IMR-90 (cell line): ENCODE measurements at regions of chr11 and their contacts with region 1.

Region 1: GRCh38 chr11:10307442-10308207 is 2.8 kb downstream of the ADM start:
- DNase-seq: peak; percentile 94
- ATAC-seq: peak; percentile 8
- H3K4me3 ChIP-seq: peak overlapping the region; percentile 65
- H3K27ac ChIP-seq: peak overlapping the region; percentile 83
- H3K4me1 ChIP-seq: peaks cover 7% of the 10 kb centered on the region
- H3K27me3 ChIP-seq: no peaks in the 10 kb centered on the region
- CTCF ChIP-seq: peak; percentile 95
- POLR2A ChIP-seq: peak; percentile 51; the same call in 1 of the 2 replicates
- RAD21 ChIP-seq: peak; percentile 87

Region 2: DNA sequence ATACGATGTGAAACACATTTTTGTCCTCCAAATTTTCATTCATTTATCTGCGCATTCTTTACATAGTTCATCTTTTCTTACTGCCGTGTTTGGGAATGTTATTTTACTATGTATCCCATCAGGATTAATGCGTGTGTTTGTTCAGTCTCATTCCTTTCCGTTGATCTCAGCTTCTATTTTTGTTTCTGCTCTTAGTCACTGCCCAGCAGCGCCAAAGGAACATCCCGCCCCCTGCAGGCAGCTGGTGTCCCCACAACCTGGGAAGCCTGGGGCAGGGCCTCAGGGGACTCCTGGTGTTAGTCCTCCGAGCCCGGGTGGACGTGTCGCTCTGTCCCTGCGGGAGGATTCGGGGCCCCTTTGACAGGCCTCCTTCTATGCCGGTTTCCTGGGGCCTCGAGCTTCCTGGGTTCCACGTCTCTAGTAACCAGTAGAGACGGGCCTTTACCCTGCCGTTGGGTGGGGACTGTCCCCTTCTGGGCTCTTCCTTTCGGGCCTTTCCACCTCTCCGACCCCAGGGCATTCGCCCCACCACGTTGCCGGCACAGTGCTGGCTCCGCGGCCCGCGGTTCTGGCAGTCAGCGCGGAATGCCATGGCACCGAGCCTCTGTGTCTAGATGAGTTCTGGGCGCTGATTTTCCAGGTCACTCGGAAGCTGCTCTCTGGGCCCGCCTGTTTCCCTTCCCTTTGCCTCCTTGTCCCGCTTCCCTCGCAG is 694.4 kb before region 1 on chr11:
- CTCF ChIA-PET with region 1: no interaction called
- POLR2A ChIA-PET with region 1: no interaction called
- dilution Hi-C with region 1: no loop called
- in situ Hi-C with region 1: loop called (anchors 25 kb)
- intact Hi-C with region 1: loop called (anchors 5 kb)
- DNase-seq: peak; percentile 98
- ATAC-seq: peak; percentile 83
- H3K4me3 ChIP-seq: peak overlapping the region; percentile 7; the same call in 1 of the 2 replicates
- H3K27ac ChIP-seq: peak overlapping the region; percentile 91
- H3K4me1 ChIP-seq: peaks cover 16% of the 10 kb centered on the region
- H3K27me3 ChIP-seq: no peaks in the 10 kb centered on the region
- CTCF ChIP-seq: peak; percentile 98
- POLR2A ChIP-seq: peak; percentile 75
- RAD21 ChIP-seq: peak; percentile 79

Region 3: GRCh38 chr11:9817191-9817590 is 490.4 kb before region 1 on chr11:
- CTCF ChIA-PET with region 1: no interaction called
- POLR2A ChIA-PET with region 1: interaction called, 33 read pairs
- dilution Hi-C with region 1: no loop called
- in situ Hi-C with region 1: no loop called
- intact Hi-C with region 1: no loop called
- DNase-seq: no peak
- ATAC-seq: no peak
- H3K4me3 ChIP-seq: no peak overlapping the region
- H3K27ac ChIP-seq: no peak overlapping the region
- H3K4me1 ChIP-seq: peaks cover 10% of the 10 kb centered on the region; the same call in 1 of the 2 replicates
- H3K27me3 ChIP-seq: no peaks in the 10 kb centered on the region
- CTCF ChIP-seq: no peak
- POLR2A ChIP-seq: no peak
- RAD21 ChIP-seq: no peak

Region 4: GRCh38 chr11:9906043-9906791 is 401.4 kb before region 1 on chr11:
- CTCF ChIA-PET with region 1: no interaction called
- POLR2A ChIA-PET with region 1: interaction called, 3 read pairs
- dilution Hi-C with region 1: no loop called
- in situ Hi-C with region 1: no loop called
- intact Hi-C with region 1: loop called (anchors 5 kb)
- DNase-seq: peak; percentile 94
- ATAC-seq: peak; percentile 92
- H3K4me3 ChIP-seq: no peak overlapping the region
- H3K27ac ChIP-seq: peak overlapping the region; percentile 92; the same call in 1 of the 2 replicates
- H3K4me1 ChIP-seq: peaks cover 11% of the 10 kb centered on the region
- H3K27me3 ChIP-seq: no peaks in the 10 kb centered on the region
- CTCF ChIP-seq: no peak
- POLR2A ChIP-seq: no peak
- RAD21 ChIP-seq: no peak

Region 5: GRCh38 chr11:9943386-9944110 is 364.1 kb before region 1 on chr11:
- CTCF ChIA-PET with region 1: no interaction called
- POLR2A ChIA-PET with region 1: no interaction called
- dilution Hi-C with region 1: no loop called
- in situ Hi-C with region 1: no loop called
- intact Hi-C with region 1: no loop called
- DNase-seq: peak; percentile 97
- ATAC-seq: peak; percentile 80
- H3K4me3 ChIP-seq: no peak overlapping the region
- H3K27ac ChIP-seq: peak overlapping the region; percentile 91; the same call in 1 of the 2 replicates
- H3K4me1 ChIP-seq: peaks cover 6% of the 10 kb centered on the region
- H3K27me3 ChIP-seq: no peaks in the 10 kb centered on the region
- CTCF ChIP-seq: no peak
- POLR2A ChIP-seq: no peak
- RAD21 ChIP-seq: no peak

Region 6: DNA sequence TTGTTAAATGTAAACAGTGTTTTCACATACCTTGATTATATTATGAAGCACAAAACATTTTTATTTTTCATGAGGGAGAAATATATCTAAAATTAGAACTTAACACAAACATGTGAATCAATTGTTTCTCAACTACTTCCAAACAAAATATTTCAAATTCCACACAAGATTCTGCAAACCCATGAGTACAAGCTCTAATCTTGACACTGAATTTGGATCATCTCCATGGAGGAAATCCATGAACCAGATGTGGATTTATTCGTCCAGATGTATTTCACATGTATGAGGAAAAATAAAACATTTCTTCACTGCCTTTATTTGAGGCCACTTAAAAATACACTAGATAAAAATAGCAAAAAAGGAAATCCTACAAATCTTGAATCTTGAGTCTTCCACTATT is 197.8 kb before region 1 on chr11:
- CTCF ChIA-PET with region 1: no interaction called
- POLR2A ChIA-PET with region 1: no interaction called
- dilution Hi-C with region 1: no loop called
- in situ Hi-C with region 1: no loop called
- intact Hi-C with region 1: loop called (anchors 10 kb)
- DNase-seq: peak; percentile 83
- ATAC-seq: peak; percentile 33
- H3K4me3 ChIP-seq: no peak overlapping the region
- H3K27ac ChIP-seq: no peak overlapping the region
- H3K4me1 ChIP-seq: peaks cover 8% of the 10 kb centered on the region; the same call in 1 of the 2 replicates
- H3K27me3 ChIP-seq: no peaks in the 10 kb centered on the region
- CTCF ChIP-seq: no peak
- POLR2A ChIP-seq: no peak
- RAD21 ChIP-seq: no peak

Region 7: GRCh38 chr11:10331548-10332289 is 24.1 kb after region 1 on chr11:
- CTCF ChIA-PET with region 1: no interaction called
- POLR2A ChIA-PET with region 1: no interaction called
- dilution Hi-C with region 1: no loop called
- in situ Hi-C with region 1: no loop called
- intact Hi-C with region 1: no loop called
- DNase-seq: no peak
- ATAC-seq: no peak
- H3K4me3 ChIP-seq: no peak overlapping the region
- H3K27ac ChIP-seq: no peak overlapping the region
- H3K4me1 ChIP-seq: peaks cover 22% of the 10 kb centered on the region
- H3K27me3 ChIP-seq: no peaks in the 10 kb centered on the region
- CTCF ChIP-seq: no peak
- POLR2A ChIP-seq: no peak
- RAD21 ChIP-seq: no peak

Region 8: DNA sequence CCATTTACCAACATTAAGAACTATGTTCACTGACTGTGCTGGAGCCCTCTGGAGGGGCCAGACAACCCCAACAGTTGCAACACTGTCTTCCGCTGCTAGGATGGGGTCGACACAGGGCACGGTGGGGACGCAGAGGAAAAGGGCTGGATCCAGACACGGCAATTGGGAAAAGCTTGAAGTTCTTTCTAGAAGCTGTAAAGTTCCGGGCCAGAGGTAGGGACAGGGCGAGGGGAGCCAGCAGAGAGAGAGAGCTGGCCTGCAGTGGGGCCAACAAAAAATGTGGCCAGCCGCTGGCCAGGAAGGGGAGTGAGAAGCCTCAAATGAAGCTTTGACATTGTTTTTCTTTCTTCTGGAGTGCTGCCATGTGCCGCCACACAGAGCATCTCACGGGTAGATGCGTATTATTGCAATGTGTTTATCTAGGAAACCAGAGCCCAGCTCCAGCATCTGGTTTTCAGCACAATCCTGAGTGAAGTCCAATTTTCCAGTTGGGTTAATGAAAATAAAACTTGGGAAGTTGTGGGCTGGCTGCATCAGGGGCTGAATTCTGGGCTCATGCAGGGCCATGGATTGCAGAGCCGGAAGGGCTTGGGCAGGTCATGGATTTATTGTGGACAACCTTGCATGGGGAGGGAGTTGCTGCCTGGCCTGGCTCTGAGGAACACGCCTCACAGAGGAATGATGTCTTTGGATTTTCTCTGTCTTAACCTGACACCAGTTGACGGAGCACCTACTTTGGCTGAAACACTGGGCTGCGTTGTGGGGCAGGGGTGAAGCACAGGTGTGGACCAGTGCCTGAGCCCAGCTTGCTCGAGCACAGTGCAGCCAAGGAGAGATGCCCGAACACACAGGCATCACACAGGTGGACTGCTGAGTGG is 79.8 kb after region 1 on chr11:
- CTCF ChIA-PET with region 1: no interaction called
- POLR2A ChIA-PET with region 1: interaction called, 18 read pairs
- dilution Hi-C with region 1: no loop called
- in situ Hi-C with region 1: no loop called
- intact Hi-C with region 1: no loop called
- DNase-seq: peak; percentile 92
- ATAC-seq: peak; percentile 78
- H3K4me3 ChIP-seq: no peak overlapping the region
- H3K27ac ChIP-seq: peak overlapping the region; percentile 92
- H3K4me1 ChIP-seq: peaks cover 32% of the 10 kb centered on the region
- H3K27me3 ChIP-seq: no peaks in the 10 kb centered on the region
- CTCF ChIP-seq: no peak
- POLR2A ChIP-seq: no peak
- RAD21 ChIP-seq: no peak